ENCODE measurements at regions of chr5 and their contacts with region 1.

Region 1: DNA sequence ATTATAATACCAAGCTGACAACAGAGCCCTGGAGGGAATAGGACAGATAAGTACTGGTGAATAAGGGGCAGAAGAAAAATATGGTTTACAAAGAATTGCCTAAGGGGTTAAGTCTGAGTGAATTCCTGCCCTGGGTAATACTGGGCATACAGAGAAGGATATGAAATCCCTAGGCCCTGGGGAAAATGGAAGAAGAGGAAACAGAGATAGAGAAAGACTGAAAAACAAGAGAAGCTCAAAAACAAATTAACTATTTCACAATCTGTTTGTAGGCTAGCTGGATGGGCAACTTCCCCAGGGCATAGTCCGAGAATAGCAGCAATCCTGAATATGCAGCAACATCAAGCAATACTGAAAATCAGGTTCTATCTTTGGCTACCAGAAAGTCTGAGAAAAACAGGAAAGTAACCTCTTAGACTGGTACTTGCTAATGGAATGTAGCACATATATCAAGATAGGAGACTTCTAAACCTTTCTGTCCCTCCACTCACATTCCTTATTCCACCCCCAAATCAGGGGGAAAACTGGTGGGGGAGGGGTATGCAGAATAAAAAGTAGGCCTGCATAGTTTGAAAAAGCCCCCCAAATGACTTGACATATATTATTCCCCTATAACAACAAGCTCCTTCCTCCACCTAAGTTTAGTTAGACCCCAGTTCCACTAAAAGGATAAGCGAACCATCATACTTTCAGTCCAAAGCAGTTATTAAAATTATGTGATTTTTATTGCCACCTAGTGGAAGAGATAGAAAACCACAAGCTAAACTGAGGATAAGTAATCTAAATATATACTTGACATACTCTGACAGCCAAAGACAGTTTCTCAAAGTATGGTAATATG is 20.6 kb downstream of the SLC38A9 start:
- DNase-seq: no peak
- ATAC-seq: peak; percentile 73

Region 2: DNA sequence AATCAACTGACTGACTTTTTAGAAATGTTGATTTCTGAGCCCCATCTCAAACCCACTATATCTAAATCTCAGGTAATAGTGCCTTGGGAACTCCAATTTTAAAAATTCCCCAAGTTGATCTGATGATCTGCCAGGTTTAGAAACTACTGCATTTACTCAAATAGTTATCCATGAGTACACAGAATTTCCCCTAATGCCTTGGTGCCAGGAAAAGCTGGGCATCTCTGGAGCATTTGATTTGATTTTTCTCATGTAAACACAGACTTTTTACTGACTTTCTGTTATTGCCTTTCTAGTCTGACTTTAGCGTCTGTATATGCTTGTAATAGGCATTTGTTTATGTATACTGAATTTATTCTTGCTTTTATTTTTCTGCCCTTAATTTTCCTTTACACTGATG is 347.9 kb before region 1 on chr5:
- intact Hi-C with region 1: loop called (anchors 2 kb)
- DNase-seq: no peak
- ATAC-seq: no peak

Region 3: DNA sequence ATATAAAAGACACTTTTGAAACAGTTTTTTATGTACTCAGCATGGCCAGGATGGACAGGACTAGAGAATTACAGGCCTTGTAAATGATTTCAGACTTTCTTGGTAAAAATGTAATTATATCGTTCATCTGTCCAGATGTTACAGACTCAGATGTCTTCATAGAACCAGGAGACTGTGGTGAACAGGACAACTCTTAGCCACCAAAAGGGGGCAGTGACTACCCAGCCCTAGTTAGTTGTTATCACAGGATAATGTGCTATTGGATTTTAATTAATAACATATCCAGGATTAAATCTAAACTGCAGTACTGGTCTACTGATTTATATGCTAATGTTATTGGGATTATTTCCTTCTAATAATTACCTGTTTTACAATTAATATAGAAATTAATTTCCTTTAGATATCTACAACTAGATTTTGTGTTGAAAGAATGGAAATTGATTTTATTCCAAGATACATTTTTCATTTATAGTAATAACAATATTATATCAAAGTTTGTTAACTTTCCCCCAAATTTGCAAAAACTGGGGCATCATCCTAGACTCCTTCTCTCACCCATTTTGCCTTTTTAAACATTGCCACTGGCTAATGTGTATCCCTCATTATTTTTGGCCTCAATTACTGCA is 284.3 kb before region 1 on chr5:
- intact Hi-C with region 1: loop called (anchors 1 kb)
- DNase-seq: no peak
- ATAC-seq: peak; percentile 65

Region 4: GRCh38 chr5:55509796-55510522 is 181.5 kb before region 1 on chr5:
- intact Hi-C with region 1: no loop called
- DNase-seq: no peak
- ATAC-seq: peak; percentile 55

Measured in Right ventricle myocardium inferior (tissue), 1 donor.